IMR-90 (cell line): ENCODE measurements at regions of chr12 and their contacts with region 1.

Region 1: DNA sequence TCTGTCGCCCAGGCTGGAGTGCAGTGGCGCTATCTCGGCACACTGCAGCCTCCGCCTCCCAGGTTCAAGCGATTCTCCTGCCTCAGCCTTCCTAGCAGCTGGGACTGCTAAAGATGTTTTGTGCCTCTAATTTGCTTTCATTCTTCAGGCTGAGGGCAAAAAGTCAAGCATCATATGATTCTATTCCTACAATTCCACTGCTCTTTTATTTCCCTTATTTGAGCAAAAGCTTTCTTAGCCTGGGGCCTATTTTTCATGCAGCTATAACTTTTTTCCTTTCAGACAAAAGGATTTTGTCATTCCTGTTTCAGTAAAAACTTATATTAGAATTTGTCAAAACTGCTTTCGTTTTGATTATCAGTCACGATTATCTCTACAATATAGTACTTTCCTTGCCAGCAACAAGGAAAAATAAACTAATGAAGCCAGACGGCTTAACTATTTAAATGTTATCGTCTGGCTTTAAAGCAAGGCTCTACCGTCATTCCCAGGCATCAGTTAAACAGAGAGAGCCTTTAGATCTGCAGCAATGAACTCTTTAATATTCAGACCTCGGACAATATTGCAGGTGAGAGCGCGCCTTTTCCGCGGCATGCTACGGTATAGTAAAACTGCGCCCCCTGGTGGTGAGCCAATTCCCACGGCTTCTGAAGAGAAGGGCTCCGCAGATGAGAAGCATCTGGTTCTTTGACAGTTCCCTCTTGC is 1.4 kb upstream of the SLC2A13 start:
- DNase-seq: peak; percentile 79
- ATAC-seq: peak; percentile 7
- H3K4me3 ChIP-seq: peak overlapping the region; percentile 42; the same call in 1 of the 2 replicates
- H3K27ac ChIP-seq: no peak overlapping the region
- H3K4me1 ChIP-seq: peaks cover 3% of the 10 kb centered on the region; the same call in 1 of the 2 replicates
- H3K27me3 ChIP-seq: 0 out of 2 replicates have a peak, but pooled peaks cover 2% of the 10 kb centered on the region
- CTCF ChIP-seq: peak; percentile 87
- POLR2A ChIP-seq: no peak
- RAD21 ChIP-seq: peak; percentile 77

Region 2: DNA sequence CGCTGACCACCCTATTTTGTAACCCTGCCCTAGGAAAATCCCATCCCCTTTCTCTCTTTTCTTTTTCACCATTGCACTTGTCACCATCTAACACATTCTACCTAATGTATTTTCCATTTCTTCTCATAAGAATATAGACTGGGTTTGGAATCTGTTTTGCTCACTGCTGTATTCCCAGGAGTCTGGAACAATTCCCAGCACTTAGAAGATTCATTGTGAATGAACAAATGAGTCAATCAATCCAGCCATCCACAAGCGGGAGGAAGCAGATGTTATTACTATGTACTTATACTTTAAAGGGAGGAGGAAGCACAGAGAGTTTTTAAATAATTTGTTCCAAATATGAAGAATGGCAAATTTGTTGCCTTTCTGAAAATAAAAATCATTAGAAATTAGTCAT is 806.5 kb before region 1 on chr12:
- CTCF ChIA-PET with region 1: no interaction called
- POLR2A ChIA-PET with region 1: no interaction called
- dilution Hi-C with region 1: no loop called
- in situ Hi-C with region 1: loop called (anchors 25 kb)
- intact Hi-C with region 1: no loop called
- DNase-seq: no peak
- ATAC-seq: no peak
- H3K4me3 ChIP-seq: no peak overlapping the region
- H3K27ac ChIP-seq: no peak overlapping the region
- H3K4me1 ChIP-seq: no peaks in the 10 kb centered on the region
- H3K27me3 ChIP-seq: no peaks in the 10 kb centered on the region
- CTCF ChIP-seq: no peak
- POLR2A ChIP-seq: no peak
- RAD21 ChIP-seq: no peak

Region 3: DNA sequence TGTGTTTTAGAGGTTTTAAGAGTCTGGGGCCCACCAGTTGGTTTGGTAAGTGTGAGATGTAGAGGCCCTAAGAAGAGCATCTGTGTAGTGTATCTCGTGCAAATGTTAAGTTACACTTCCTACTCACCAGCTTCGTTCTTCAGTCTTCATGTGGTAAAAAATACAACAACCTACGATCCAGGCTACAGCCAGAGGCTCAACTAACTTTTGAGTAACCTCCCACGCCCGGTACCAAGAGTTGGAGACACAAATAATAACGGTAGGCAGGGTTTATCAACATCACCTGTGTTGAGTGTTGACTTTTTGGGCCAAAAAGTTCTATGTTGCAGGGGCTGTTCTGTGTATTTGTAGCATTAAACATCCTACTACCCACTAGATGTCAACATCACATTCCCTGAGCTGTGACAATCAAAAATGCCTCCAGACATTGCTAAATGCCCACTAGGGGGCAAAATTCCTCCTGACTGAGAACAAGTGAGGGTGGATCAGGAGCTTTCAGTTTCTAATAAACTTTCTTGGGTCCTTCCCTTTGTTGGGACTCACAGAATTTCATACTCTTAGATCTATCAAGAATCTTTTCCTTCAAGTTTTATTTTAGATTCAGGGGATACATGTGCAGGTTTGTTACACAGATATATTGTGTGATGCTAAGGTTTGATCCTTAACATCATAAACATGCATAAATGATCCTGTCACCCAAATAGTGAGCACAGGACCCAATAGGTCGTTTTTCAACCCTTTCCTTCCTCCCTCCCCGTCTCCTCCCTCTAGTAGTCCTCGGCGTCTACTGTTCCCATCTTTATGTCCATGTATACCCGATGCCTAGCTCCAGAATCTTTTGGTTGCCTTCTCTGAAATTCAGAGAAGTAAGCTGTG is 96.1 kb before region 1 on chr12:
- CTCF ChIA-PET with region 1: interaction called, 19 read pairs
- POLR2A ChIA-PET with region 1: interaction called, 10 read pairs
- dilution Hi-C with region 1: no loop called
- in situ Hi-C with region 1: loop called (anchors 5 kb)
- intact Hi-C with region 1: loop called (anchors 1 kb)
- DNase-seq: peak; percentile 72
- ATAC-seq: peak; percentile 91
- H3K4me3 ChIP-seq: peak overlapping the region; percentile 11; the same call in 1 of the 2 replicates
- H3K27ac ChIP-seq: no peak overlapping the region
- H3K4me1 ChIP-seq: 0 out of 2 replicates have a peak, but pooled peaks cover 2% of the 10 kb centered on the region
- H3K27me3 ChIP-seq: no peaks in the 10 kb centered on the region
- CTCF ChIP-seq: peak; percentile 81
- POLR2A ChIP-seq: no peak
- RAD21 ChIP-seq: peak; percentile 67

Region 4: GRCh38 chr12:40146800-40147797 is 39.8 kb after region 1 on chr12:
- CTCF ChIA-PET with region 1: no interaction called
- POLR2A ChIA-PET with region 1: no interaction called
- dilution Hi-C with region 1: no loop called
- in situ Hi-C with region 1: no loop called
- intact Hi-C with region 1: no loop called
- DNase-seq: no peak
- ATAC-seq: no peak
- H3K4me3 ChIP-seq: no peak overlapping the region
- H3K27ac ChIP-seq: no peak overlapping the region
- H3K4me1 ChIP-seq: no peaks in the 10 kb centered on the region
- H3K27me3 ChIP-seq: no peaks in the 10 kb centered on the region
- CTCF ChIP-seq: no peak
- POLR2A ChIP-seq: no peak
- RAD21 ChIP-seq: no peak

Region 5: GRCh38 chr12:40375076-40375475 is 267.8 kb after region 1 on chr12:
- CTCF ChIA-PET with region 1: no interaction called
- POLR2A ChIA-PET with region 1: no interaction called
- dilution Hi-C with region 1: no loop called
- in situ Hi-C with region 1: no loop called
- intact Hi-C with region 1: no loop called
- DNase-seq: peak; percentile 0
- ATAC-seq: no peak
- H3K4me3 ChIP-seq: no peak overlapping the region
- H3K27ac ChIP-seq: no peak overlapping the region
- H3K4me1 ChIP-seq: no peaks in the 10 kb centered on the region
- H3K27me3 ChIP-seq: no peaks in the 10 kb centered on the region
- CTCF ChIP-seq: peak; percentile 26; the same call in 1 of the 2 replicates
- POLR2A ChIP-seq: no peak
- RAD21 ChIP-seq: no peak

Region 6: DNA sequence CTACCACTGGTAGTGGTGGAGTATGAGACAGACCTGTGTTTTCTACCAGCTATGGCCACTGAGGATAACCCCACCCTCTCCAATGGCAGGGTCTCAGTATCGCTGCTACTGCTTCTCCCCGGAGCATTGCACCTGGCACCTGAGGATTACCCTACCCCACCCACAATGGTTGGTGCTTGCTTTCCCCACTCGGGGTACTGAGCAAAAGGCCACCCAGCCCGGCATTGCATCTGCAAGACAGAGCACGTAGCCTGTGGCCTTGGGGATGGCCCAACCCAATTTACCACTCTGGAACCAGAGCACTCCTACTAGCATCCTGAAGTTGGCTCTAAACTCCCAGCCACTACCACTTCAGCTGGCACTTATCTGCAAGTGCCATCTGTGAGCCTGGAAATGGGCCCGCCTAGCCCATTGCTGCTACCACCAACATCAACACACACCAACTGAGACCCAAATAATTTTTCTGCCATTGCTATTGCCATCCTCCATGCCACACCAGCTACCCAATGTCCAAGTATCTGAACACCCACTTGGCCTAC is 730.7 kb after region 1 on chr12:
- CTCF ChIA-PET with region 1: no interaction called
- POLR2A ChIA-PET with region 1: no interaction called
- dilution Hi-C with region 1: no loop called
- in situ Hi-C with region 1: no loop called
- intact Hi-C with region 1: no loop called
- DNase-seq: no peak
- ATAC-seq: no peak
- H3K4me3 ChIP-seq: no peak overlapping the region
- H3K27ac ChIP-seq: no peak overlapping the region
- H3K4me1 ChIP-seq: no peaks in the 10 kb centered on the region
- H3K27me3 ChIP-seq: no peaks in the 10 kb centered on the region
- CTCF ChIP-seq: no peak
- POLR2A ChIP-seq: no peak
- RAD21 ChIP-seq: no peak